ENCODE measurements at regions of chr4 and their contacts with region 1.

Region 1: DNA sequence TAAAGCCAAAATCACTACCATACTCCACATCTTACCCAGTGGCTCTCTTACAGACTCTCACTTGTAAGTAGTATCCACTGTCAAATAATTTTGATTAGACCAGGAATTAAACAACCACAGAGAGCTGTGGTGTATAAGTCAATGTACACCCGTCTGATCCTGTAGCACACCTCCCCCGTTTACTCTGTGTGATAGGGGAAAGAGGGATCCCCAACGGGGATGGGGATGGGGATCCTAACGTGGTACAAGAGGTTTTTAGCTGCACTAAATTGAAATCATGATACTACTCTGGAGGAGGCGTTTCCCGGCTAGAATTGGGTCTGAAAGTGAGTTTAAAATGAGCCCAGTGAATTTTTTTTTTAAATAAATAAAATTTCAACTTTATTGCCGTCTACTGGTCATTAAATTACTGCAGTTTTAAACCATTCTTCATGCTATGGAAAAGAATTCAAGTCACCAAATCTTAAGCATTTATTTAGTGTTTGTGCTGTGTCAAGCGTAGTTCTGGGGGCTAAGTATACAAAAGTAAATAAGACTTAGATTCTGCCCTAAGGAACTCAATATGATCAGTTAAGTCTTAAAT is 76.6 kb downstream of the INTS12 start:
- DNase-seq: peak; percentile 66
- ATAC-seq: peak; percentile 19
- H3K4me3 ChIP-seq: no peak overlapping the region
- H3K27ac ChIP-seq: peak overlapping the region; percentile 93
- H3K4me1 ChIP-seq: peaks cover 38% of the 10 kb centered on the region
- H3K27me3 ChIP-seq: no peaks in the 10 kb centered on the region
- CTCF ChIP-seq: peak; percentile 58

Region 2: GRCh38 chr4:105471566-105472176 is 160.2 kb before region 1 on chr4:
- CTCF ChIA-PET with region 1: no interaction called
- POLR2A ChIA-PET with region 1: no interaction called
- intact Hi-C with region 1: loop called (anchors 1 kb)
- DNase-seq: peak; percentile 78
- ATAC-seq: peak; percentile 46
- H3K4me3 ChIP-seq: peak overlapping the region; percentile 94
- H3K27ac ChIP-seq: no peak overlapping the region
- H3K4me1 ChIP-seq: peaks cover 20% of the 10 kb centered on the region
- H3K27me3 ChIP-seq: no peaks in the 10 kb centered on the region
- CTCF ChIP-seq: peak; percentile 73

Region 3: DNA sequence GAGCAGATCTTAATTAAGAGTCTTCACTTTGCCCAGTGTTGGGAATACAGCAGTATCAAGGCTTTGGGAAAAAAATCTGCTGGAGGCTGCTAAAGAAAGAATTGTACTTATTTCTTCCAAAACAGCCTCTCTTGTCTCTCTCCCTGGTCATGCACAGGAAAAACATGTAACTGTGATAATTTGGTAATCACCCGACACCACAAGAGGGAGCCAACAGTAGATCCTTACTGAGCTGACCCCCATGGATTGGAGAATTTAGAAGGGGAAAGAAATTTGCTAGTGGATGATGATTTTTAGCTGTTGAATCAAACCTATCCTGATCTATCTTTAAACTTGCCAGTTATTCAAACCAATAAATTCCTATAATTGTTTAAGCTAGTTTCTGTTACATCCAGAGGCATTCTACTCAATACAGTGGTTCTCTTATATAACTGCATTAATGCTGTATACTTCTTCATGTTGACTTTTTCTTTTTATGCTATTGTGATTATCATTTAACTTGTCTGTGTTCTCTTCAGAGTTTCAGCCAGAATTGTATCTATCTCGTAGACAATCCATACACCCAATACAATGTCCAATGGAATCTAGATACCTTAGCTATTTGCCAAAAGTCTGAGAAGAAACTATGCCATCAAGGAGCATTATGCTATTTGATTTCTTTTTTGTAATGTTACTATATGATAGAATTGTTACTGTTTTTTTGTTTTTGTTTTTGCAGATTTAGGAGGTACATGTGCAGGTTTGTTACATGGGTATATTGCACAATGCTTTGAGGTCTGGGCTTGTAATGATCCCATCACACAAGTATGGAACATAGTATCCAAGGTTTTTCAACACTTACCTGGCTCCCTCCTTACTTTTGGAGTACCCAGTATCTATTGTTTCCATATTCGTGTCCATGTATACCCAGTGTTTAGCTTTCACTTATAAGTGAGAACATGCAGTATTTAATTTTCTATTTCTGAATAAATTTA is 110.8 kb before region 1 on chr4:
- CTCF ChIA-PET with region 1: interaction called, 5 read pairs
- POLR2A ChIA-PET with region 1: no interaction called
- intact Hi-C with region 1: loop called (anchors 1 kb)
- DNase-seq: peak; percentile 61
- ATAC-seq: peak; percentile 77
- H3K4me3 ChIP-seq: no peak overlapping the region
- H3K27ac ChIP-seq: no peak overlapping the region
- H3K4me1 ChIP-seq: no peaks in the 10 kb centered on the region
- H3K27me3 ChIP-seq: no peaks in the 10 kb centered on the region
- CTCF ChIP-seq: peak; percentile 78

Region 4: GRCh38 chr4:105586638-105587328 is 45.1 kb before region 1 on chr4:
- CTCF ChIA-PET with region 1: no interaction called
- POLR2A ChIA-PET with region 1: no interaction called
- intact Hi-C with region 1: loop called (anchors 5 kb)
- DNase-seq: no peak
- ATAC-seq: 0 out of 2 replicates have a peak, but pooled peaks have one; percentile 17
- H3K4me3 ChIP-seq: peak overlapping the region; percentile 44
- H3K27ac ChIP-seq: peak overlapping the region; percentile 86
- H3K4me1 ChIP-seq: peaks cover 33% of the 10 kb centered on the region
- H3K27me3 ChIP-seq: no peaks in the 10 kb centered on the region
- CTCF ChIP-seq: no peak

Region 5: DNA sequence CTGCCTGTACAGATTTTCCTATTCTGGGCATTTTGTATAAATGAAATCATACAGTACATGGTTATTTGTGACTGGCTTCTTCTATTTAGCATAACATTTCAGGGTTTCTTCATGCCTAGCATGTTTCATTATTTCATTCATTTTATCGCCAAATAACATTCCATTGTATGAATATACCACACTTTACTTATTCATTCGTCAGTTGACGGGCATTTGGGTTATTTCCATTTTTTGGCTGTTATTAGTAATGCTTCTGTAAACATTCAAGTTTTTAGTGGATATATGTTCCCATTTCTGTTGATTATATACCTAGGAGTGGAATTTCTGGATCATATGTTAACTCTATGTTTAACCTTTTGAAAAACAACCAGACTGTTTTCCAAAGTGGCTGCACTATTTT is 29.1 kb after region 1 on chr4:
- CTCF ChIA-PET with region 1: no interaction called
- POLR2A ChIA-PET with region 1: no interaction called
- intact Hi-C with region 1: loop called (anchors 2 kb)
- DNase-seq: peak; percentile 85
- ATAC-seq: peak; percentile 66
- H3K4me3 ChIP-seq: no peak overlapping the region
- H3K27ac ChIP-seq: peak overlapping the region; percentile 42
- H3K4me1 ChIP-seq: peaks cover 35% of the 10 kb centered on the region
- H3K27me3 ChIP-seq: no peaks in the 10 kb centered on the region
- CTCF ChIP-seq: no peak

Region 6: GRCh38 chr4:105708530-105709391 is 76.9 kb after region 1 on chr4 and contains the starts of genes GSTCD and INTS12:
- CTCF ChIA-PET with region 1: interaction called, 3 read pairs
- POLR2A ChIA-PET with region 1: no interaction called
- intact Hi-C with region 1: loop called (anchors 2 kb)
- DNase-seq: peak; percentile 91
- ATAC-seq: peak; percentile 71
- H3K4me3 ChIP-seq: peak within 1 kb of the TSS; percentile 86
- H3K27ac ChIP-seq: peak within 1 kb of the TSS; percentile 79
- H3K4me1 ChIP-seq: peaks cover 41% of the 10 kb centered on the region
- H3K27me3 ChIP-seq: no peaks in the 10 kb centered on the region
- CTCF ChIP-seq: no peak
- total RNA-seq, gene GSTCD: 12.1 and 15.4 TPM in 2 replicates
- total RNA-seq, gene INTS12: 12.6 and 13.3 TPM in 2 replicates

Region 7: DNA sequence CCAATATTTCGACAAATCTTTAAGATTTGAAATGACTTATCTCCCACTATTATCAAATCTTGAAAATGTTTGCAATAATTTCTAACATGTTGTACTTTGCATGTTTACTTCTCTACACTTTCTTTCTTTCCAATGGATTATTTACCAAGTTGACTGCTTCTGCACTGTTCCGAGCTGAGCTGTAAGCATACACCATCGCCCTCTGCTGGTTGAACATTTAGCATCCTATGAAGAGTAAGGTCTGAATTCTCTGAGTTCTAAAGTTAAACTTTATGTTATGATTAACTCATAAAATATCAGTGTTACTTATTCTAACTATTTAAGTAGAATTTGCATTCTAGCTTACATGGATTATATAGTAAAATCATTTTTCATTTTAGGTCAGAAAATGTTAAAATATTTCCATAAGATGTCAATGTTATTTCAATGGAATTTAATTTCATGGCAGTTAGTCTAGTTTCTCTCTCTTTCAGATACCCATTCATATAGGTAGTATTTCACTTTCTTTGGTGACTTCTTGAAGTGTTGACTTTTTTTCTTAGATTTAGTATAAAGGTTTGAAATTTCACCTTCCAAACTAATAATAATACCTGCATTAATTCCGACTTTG is 1266.8 kb after region 1 on chr4:
- CTCF ChIA-PET with region 1: no interaction called
- POLR2A ChIA-PET with region 1: no interaction called
- intact Hi-C with region 1: no loop called
- DNase-seq: peak; percentile 68
- ATAC-seq: peak; percentile 81
- H3K4me3 ChIP-seq: no peak overlapping the region
- H3K27ac ChIP-seq: no peak overlapping the region
- H3K4me1 ChIP-seq: no peaks in the 10 kb centered on the region
- H3K27me3 ChIP-seq: no peaks in the 10 kb centered on the region
- CTCF ChIP-seq: peak; percentile 81

Measured in PC-3 (cell line).